IMR-90 (cell line): ENCODE measurements at regions of chr10 and their contacts with region 1.

Region 1: DNA sequence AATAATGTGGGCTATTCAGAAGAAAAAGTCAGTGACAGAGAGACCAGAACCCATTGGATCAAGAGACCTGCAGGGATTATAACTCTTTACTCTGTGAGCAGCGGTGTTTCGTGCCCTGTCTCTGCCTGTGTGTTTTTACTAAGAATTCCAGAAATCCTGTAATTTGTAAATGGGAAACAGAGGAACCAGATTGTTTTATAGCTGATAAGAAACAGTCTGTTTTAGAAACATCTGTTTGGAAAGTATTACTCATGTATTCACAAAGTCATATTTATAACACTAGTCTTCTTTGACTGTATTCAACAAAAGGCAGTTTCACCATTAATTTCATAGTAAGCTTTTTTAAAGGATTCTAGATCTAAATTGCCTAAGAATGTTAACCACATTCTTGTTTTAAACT is 30.0 kb upstream of the VDAC2 start:
- DNase-seq: peak; percentile 63
- ATAC-seq: peak; percentile 62
- H3K4me3 ChIP-seq: no peak overlapping the region
- H3K27ac ChIP-seq: peak overlapping the region; percentile 50; the same call in 1 of the 2 replicates
- H3K4me1 ChIP-seq: peaks cover 10% of the 10 kb centered on the region
- H3K27me3 ChIP-seq: no peaks in the 10 kb centered on the region
- CTCF ChIP-seq: no peak
- POLR2A ChIP-seq: no peak
- RAD21 ChIP-seq: no peak

Region 2: DNA sequence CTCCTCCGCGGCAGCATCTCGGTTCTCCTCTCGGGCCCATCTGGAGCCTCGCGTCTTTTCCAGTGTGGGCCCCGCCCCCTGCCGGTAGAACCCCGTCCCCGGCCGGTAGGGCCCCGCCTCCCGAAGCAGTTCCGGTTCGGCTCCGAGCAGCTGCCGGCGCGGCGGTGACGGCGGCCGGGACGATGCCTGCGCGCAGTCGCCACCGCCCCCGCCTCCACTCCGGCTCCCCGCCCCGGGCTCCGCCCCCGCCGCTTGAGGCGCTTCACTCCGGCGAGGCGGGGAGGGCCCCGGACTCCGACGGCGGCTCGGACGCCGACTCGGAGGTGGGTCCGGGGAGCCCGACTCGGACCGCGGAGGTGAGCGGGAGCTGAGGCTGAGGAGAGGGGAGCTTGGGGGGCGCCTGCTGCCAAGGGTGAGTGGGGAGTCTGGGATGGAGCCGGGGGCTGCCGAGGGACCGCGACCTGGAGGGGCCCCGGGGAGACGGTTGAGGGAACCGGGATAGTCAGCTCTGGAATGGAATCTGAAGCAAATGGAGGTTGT is 69.2 kb before region 1 on chr10 and contains the start of gene SAMD8:
- CTCF ChIA-PET with region 1: no interaction called
- POLR2A ChIA-PET with region 1: no interaction called
- dilution Hi-C with region 1: no loop called
- in situ Hi-C with region 1: no loop called
- intact Hi-C with region 1: loop called (anchors 5 kb)
- DNase-seq: peak; percentile 95
- ATAC-seq: peak; percentile 91
- H3K4me3 ChIP-seq: peak within 1 kb of the TSS; percentile 98
- H3K27ac ChIP-seq: peak within 1 kb of the TSS; percentile 96
- H3K4me1 ChIP-seq: peaks cover 2% of the 10 kb centered on the region; the same call in 1 of the 2 replicates
- H3K27me3 ChIP-seq: no peaks in the 10 kb centered on the region
- CTCF ChIP-seq: no peak
- POLR2A ChIP-seq: peak; percentile 90
- RAD21 ChIP-seq: no peak
- total RNA-seq, gene SAMD8: 28.7 and 34.2 TPM in 2 replicates

Region 3: GRCh38 chr10:75127471-75127870 is 53.1 kb before region 1 on chr10:
- CTCF ChIA-PET with region 1: no interaction called
- POLR2A ChIA-PET with region 1: no interaction called
- dilution Hi-C with region 1: no loop called
- in situ Hi-C with region 1: no loop called
- intact Hi-C with region 1: loop called (anchors 5 kb)
- DNase-seq: peak; percentile 44
- ATAC-seq: peak; percentile 59
- H3K4me3 ChIP-seq: no peak overlapping the region
- H3K27ac ChIP-seq: no peak overlapping the region
- H3K4me1 ChIP-seq: peaks cover 8% of the 10 kb centered on the region
- H3K27me3 ChIP-seq: no peaks in the 10 kb centered on the region
- CTCF ChIP-seq: no peak
- POLR2A ChIP-seq: no peak
- RAD21 ChIP-seq: no peak

Region 4: GRCh38 chr10:75143353-75143752 is 37.2 kb before region 1 on chr10:
- CTCF ChIA-PET with region 1: no interaction called
- POLR2A ChIA-PET with region 1: no interaction called
- dilution Hi-C with region 1: no loop called
- in situ Hi-C with region 1: no loop called
- intact Hi-C with region 1: no loop called
- DNase-seq: peak; percentile 32
- ATAC-seq: no peak
- H3K4me3 ChIP-seq: no peak overlapping the region
- H3K27ac ChIP-seq: no peak overlapping the region; the same call in 1 of the 2 replicates
- H3K4me1 ChIP-seq: no peaks in the 10 kb centered on the region
- H3K27me3 ChIP-seq: no peaks in the 10 kb centered on the region
- CTCF ChIP-seq: no peak
- POLR2A ChIP-seq: no peak
- RAD21 ChIP-seq: no peak